Naive thymus-derived CD4-positive, alpha-beta T cell (primary cell): ENCODE measurements at regions of chr2 and their contacts with region 1.

Region 1: GRCh38 chr2:38535744-38536506 is 66.8 kb downstream of the HNRNPLL start:
- DNase-seq: peak; percentile 48 to 88 (median 72)
- ATAC-seq: peak; percentile 95
- H3K4me3 ChIP-seq: peak overlapping the region; percentile 40
- H3K4me3 Mint-ChIP-seq: peak overlapping the region; percentile 36 to 72 (median 56)
- H3K27ac ChIP-seq: no peak overlapping the region
- H3K27ac Mint-ChIP-seq: peak overlapping the region in 1 of 9 donors; percentile 59
- H3K4me1 ChIP-seq: peaks cover 0 to 5% of the 10 kb centered on the region in 2 donors
- H3K4me1 Mint-ChIP-seq: peaks cover 0 to 6% (median 3%) of the 10 kb centered on the region in 7 donors
- H3K27me3 ChIP-seq: peaks cover 0 to 4% of the 10 kb centered on the region in 2 donors
- H3K27me3 Mint-ChIP-seq: peaks cover 4 to 37% (median 8%) of the 10 kb centered on the region in 5 donors

Region 2: GRCh38 chr2:38835015-38835601 is 299.2 kb after region 1 on chr2:
- CTCF ChIA-PET with region 1: no interaction called
- POLR2A ChIA-PET with region 1: no interaction called
- intact Hi-C with region 1: loop called (anchors 1 to 5 kb)
- DNase-seq: peak in 1 of 9 donors; percentile 5
- ATAC-seq: no peak
- H3K4me3 ChIP-seq: no peak overlapping the region
- H3K4me3 Mint-ChIP-seq: no peak overlapping the region
- H3K27ac ChIP-seq: no peak overlapping the region
- H3K27ac Mint-ChIP-seq: no peak overlapping the region
- H3K4me1 ChIP-seq: no peaks in the 10 kb centered on the region
- H3K4me1 Mint-ChIP-seq: peaks cover 0 to 2% (median 0%) of the 10 kb centered on the region in 7 donors
- H3K27me3 ChIP-seq: no peaks in the 10 kb centered on the region
- H3K27me3 Mint-ChIP-seq: no peaks in the 10 kb centered on the region